ENCODE measurements at regions of chr17 and their contacts with region 1.

Region 1: DNA sequence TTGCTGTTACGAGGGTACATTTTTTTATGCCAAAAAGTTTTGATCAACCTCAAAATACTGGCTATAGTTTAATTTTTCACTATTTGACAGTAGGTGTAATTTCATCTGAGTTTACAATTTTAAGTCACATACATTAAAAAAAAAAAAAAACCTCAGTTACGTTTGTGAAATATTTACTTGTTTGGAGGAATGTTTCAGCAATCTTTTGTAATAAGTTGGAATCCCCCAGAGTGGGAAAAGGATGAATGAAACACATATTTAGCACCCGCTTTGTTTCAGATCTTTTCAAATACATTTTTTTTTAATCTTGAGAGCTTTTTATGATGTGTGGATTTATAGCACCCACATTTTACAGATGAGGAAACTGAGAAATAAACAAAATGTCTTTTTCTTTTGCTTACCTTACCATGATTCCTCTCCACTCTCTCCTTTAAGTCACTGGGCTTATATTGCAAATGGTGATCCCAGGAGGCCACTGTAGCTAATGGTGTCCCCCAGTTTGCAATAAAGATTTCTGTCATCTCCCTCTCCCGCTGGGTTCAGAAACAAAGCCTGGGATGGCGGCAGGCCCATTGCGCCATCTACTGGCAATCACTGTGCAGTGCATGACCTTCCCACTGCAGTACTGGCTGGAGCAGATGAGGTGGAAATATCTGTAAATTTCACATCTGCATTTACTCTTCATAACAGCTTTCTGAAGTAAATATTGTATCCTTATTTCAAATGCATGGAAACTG is 27.7 kb downstream of the TBC1D3B start:
- DNase-seq: peak; percentile 47 to 84 (median 71)
- ATAC-seq: peak; percentile 56 to 94 (median 90)
- H3K4me3 ChIP-seq: no peak overlapping the region
- H3K27ac ChIP-seq: peak overlapping the region in 1 of 12 donors; percentile 7
- H3K4me1 ChIP-seq: peaks cover 0 to 9% (median 0%) of the 10 kb centered on the region in 12 donors
- H3K27me3 ChIP-seq: peaks cover 0 to 16% (median 0%) of the 10 kb centered on the region in 9 donors
- CTCF ChIP-seq: peak; percentile 91 to 100 (median 98)
- POLR2A ChIP-seq: no peak

Region 2: DNA sequence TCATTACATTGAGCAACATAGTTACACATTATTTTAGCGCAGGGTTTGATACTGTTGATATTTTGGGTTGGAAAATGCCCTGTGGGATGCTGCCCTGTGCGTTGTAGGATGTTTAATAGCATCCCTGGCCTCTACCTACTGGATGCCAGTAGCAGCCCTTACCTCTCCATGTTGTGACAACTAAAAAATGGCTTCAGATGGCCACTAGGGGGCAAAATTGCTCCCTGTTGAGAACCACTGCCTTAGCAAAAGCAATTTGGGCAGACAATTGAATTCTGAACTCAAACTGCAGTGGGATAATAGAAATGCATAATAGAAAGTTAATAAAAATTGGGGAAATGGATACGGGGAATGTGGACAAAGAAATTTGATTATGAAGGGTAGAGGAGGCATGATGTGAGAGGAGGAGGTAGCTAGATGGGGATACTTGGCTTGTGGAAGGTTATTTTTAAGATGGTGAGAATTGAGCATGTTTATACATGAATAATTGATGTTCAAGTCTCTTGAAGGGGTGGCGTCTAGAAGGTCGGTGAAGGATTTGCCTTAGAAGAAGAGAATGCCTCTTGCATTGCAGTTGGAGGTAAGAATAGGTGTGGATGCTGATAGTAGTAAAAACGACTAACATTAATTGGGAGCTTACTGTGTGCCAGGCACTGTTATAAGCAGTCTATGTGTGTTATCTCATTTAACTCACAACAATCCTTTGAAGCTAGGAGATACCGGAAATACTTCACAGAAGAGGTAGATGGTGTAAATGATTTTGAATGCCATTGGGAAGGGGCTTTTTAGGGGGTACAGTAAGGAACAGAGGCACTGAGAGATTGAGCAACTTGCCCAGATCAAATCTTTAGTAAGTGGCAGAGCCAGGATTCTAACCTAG is 299.0 kb before region 1 on chr17:
- intact Hi-C with region 1: loop called in 1 of 10 experiments (anchors 10 kb)
- DNase-seq: peak in 3 of 5 donors; percentile 20 to 44 (median 38)
- ATAC-seq: peak in 2 of 4 donors; percentile 43 to 67
- H3K4me3 ChIP-seq: no peak overlapping the region
- H3K27ac ChIP-seq: no peak overlapping the region
- H3K4me1 ChIP-seq: peaks cover 0 to 6% (median 0%) of the 10 kb centered on the region in 12 donors
- H3K27me3 ChIP-seq: no peaks in the 10 kb centered on the region
- CTCF ChIP-seq: peak; percentile 52 to 81 (median 73)
- POLR2A ChIP-seq: no peak

Region 3: GRCh38 chr17:35969558-35970380 is 179.0 kb before region 1 on chr17:
- intact Hi-C with region 1: loop called (anchors 1 to 10 kb)
- DNase-seq: peak in 4 of 5 donors; percentile 63 to 78 (median 69)
- ATAC-seq: peak; percentile 67 to 81 (median 75)
- H3K4me3 ChIP-seq: no peak overlapping the region
- H3K27ac ChIP-seq: no peak overlapping the region
- H3K4me1 ChIP-seq: peaks cover 0 to 22% (median 11%) of the 10 kb centered on the region in 12 donors
- H3K27me3 ChIP-seq: no peaks in the 10 kb centered on the region
- CTCF ChIP-seq: peak; percentile 72 to 94 (median 84)
- POLR2A ChIP-seq: no peak

Region 4: GRCh38 chr17:36072431-36073121 is 76.2 kb before region 1 on chr17:
- intact Hi-C with region 1: loop called in 1 of 10 experiments (anchors 10 kb)
- DNase-seq: peak in 3 of 5 donors; percentile 44 to 69 (median 46)
- ATAC-seq: peak in 3 of 4 donors; percentile 34 to 45 (median 41)
- H3K4me3 ChIP-seq: no peak overlapping the region
- H3K27ac ChIP-seq: peak overlapping the region in 1 of 12 donors; percentile 9
- H3K4me1 ChIP-seq: no peaks in the 10 kb centered on the region
- H3K27me3 ChIP-seq: peaks cover 0 to 3% (median 0%) of the 10 kb centered on the region in 9 donors
- CTCF ChIP-seq: peak; percentile 41 to 80 (median 60)
- POLR2A ChIP-seq: no peak

Region 5: DNA sequence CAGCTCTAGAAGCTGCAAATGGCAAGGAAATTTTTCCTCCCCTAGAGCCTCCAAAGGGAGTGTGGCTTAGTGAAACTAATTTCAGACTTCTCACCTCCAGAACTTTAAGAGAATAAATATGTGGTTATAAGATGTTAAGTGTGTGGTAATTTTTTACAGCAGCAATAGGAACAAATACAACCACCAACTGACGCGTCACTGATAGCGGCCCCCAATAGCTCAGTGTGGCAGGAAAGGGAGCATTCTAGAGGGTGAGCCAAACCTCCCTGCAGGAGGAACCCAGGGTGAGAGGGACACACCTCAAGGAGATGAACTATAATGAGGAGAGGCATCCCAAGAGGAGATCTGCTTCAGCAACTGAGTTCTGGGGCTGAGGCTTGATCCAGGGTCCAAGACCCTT is 41.1 kb before region 1 on chr17:
- intact Hi-C with region 1: loop called in 1 of 10 experiments (anchors 5 kb)
- DNase-seq: no peak
- ATAC-seq: no peak
- H3K4me3 ChIP-seq: no peak overlapping the region
- H3K27ac ChIP-seq: peak overlapping the region in 1 of 12 donors; percentile 55
- H3K4me1 ChIP-seq: peaks cover 0 to 40% (median 0%) of the 10 kb centered on the region in 12 donors
- H3K27me3 ChIP-seq: peaks cover 0 to 6% (median 0%) of the 10 kb centered on the region in 9 donors
- CTCF ChIP-seq: no peak
- POLR2A ChIP-seq: no peak

Region 6: DNA sequence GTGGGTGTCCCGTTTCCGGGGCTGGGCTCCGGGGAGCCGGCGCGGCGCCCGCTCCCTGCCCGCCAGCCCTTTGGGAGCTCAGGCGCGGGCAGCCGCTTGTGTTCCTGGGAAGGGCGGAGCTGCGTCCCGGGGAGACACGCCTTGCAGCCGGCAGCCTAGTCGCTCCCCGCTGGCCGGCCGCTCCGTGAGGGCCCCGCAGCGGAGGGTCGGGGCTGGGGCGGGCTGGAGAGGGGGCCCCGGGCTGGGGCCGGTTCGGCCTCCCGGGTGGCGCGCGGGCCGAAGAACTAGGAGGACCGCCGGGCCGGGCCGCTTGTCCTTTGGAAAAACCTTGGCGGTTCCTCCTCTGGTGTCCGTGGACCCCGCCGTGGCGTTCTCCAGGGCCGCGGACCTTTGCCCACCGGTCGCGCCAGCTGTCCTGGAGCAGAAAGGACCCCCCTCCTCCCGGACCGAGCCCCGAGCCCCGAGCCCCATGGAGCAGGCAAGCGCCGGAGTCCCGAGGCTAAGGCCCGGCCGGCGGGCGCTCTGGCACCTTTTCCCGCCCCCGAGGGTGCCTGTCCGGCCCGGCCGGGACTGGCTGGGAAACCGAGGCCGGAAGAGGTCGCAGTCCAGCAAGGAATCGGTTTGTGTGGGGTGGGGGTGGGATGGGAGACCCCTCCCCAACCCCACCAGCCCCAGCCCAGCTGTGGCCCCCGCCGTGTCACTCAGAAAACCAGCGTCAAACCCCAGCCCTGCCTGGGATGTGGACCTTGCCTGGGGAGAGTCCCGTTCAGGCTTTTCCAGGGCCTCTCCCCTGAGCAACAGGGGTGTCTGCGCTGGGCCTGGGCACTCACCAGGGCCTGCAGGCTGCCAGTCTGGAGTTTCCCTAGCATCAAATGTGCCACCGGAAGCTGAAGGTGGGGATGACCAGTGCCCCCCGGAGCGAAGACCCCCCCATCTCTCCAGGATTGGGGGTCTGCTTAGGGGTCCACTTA is 34.6 kb after region 1 on chr17:
- intact Hi-C with region 1: no loop called
- DNase-seq: peak; percentile 72 to 93 (median 81)
- ATAC-seq: peak in 3 of 4 donors; percentile 81 to 95 (median 90)
- H3K4me3 ChIP-seq: peak overlapping the region; percentile 30 to 75 (median 62)
- H3K27ac ChIP-seq: peak overlapping the region in 8 of 12 donors; percentile 23 to 78 (median 60)
- H3K4me1 ChIP-seq: peaks cover 0 to 21% (median 2%) of the 10 kb centered on the region in 12 donors
- H3K27me3 ChIP-seq: peaks cover 0 to 45% (median 0%) of the 10 kb centered on the region in 9 donors
- CTCF ChIP-seq: peak in 1 of 12 donors; percentile 16
- POLR2A ChIP-seq: no peak

Region 7: GRCh38 chr17:36463916-36464315 is 315.2 kb after region 1 on chr17:
- intact Hi-C with region 1: no loop called
- DNase-seq: peak; percentile 44 to 69 (median 52)
- ATAC-seq: peak; percentile 82 to 97 (median 94)
- H3K4me3 ChIP-seq: no peak overlapping the region
- H3K27ac ChIP-seq: no peak overlapping the region
- H3K4me1 ChIP-seq: peaks cover 0 to 11% (median 0%) of the 10 kb centered on the region in 12 donors
- H3K27me3 ChIP-seq: peaks cover 4 to 58% (median 28%) of the 10 kb centered on the region in 9 donors
- CTCF ChIP-seq: no peak
- POLR2A ChIP-seq: no peak

Measured in heart left ventricle (tissue), 16 donors.